Activated naive CD4-positive, alpha-beta T cell treated with anti-CD3 and anti-CD28 coated beads, Interleukin-2, amount 10 ng/mL, durations not matched to agents 7 days and 5 days (primary cell): ENCODE measurements at regions of chr5 and their contacts with region 1.

Region 1: GRCh38 chr5:142874537-142874936 is 104.4 kb downstream of the ARHGAP26 start:
- DNase-seq: no peak
- H3K4me3 Mint-ChIP-seq: no peak overlapping the region
- H3K27ac Mint-ChIP-seq: no peak overlapping the region
- H3K4me1 Mint-ChIP-seq: no peaks in the 10 kb centered on the region
- H3K27me3 Mint-ChIP-seq: no peaks in the 10 kb centered on the region

Region 2: GRCh38 chr5:142713121-142713706 is 161.3 kb before region 1 on chr5:
- CTCF ChIA-PET with region 1: interaction called, 217 read pairs
- DNase-seq: peak; percentile 87
- H3K4me3 Mint-ChIP-seq: peak overlapping the region; percentile 68
- H3K27ac Mint-ChIP-seq: no peak overlapping the region
- H3K4me1 Mint-ChIP-seq: peaks cover 6% of the 10 kb centered on the region
- H3K27me3 Mint-ChIP-seq: peaks cover 32% of the 10 kb centered on the region